ENCODE measurements at regions of chr14 and their contacts with region 1.

Region 1: DNA sequence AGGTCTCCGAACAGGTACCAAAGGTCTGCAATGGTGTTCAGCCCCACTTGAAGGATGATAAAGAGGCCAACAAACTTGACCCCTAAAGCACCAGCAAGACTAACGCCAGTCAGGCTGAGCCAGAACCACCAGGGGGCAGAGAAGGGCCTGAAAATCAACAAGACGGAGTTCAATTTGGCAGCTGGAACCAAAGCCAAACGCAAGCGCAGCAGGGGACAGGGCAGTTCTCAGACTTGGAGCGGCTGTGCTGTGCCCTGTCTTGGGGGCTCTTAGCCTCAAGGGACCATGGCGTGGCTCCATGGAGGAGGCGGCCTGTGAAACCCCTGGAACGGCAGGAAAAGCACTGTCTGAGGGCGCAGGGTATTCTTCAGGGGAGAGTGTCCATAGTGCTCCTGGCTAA is 19.6 kb downstream of the POMT2 start:
- DNase-seq: peak; percentile 73
- CTCF ChIP-seq: peak; percentile 51

Region 2: DNA sequence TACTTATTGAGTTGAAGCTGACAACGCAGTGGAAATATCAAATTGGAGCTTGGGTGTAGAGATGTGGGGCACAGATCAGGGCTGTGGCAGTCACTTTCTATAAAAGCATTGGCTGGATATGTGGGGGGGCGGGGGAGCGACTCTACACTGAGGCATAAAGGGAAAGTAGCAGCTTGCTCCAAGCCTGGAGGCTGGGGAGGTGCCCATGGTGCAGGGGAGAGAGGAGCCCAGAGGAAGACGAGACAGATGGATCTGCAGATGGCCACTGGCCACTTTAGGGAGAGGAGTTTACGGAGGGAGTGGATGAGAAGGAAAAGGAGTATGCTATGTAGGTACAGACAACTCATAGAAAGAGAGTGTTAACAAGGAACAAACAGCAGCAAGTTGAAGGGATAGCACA is 16.6 kb before region 1 on chr14:
- CTCF ChIA-PET with region 1: interaction called, 11 read pairs
- POLR2A ChIA-PET with region 1: no interaction called
- DNase-seq: no peak
- CTCF ChIP-seq: no peak

Region 3: DNA sequence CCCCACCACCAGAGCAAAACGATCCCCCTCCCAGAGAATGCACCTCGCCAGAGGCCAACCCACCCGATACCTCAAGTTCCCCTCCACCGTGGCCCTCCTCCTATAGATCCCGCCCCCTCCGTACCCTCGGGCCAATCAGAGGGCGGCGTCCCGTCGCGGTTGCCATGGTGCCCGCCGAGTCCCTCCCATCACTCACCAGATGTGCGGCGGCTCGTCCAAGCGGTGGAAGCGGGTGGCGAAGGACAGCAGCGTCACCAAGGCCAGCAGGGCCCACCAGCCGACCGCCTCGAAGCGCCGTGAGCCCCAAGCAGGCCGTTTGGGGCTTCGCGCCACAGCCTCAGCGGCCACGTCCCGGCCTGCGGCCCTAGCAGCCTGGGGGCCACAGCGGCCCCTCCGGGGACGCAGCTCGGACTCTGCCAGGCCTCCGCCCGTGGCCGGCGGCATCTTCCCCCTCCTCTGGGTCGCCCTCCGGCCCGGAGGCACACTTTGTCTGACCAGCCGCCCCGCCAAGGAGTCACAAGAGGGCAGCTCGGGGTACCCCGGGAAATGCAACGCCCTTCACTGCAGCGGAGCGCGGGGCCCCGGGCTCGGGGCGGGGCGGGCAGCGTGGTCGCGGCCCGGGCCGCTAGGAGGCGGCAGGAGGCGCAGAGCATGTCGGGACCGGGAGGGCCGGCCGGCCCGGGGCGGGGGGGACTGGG is 19.3 kb after region 1 on chr14 and contains the start of gene POMT2:
- CTCF ChIA-PET with region 1: interaction called, 247 read pairs
- POLR2A ChIA-PET with region 1: no interaction called
- DNase-seq: peak; percentile 93
- CTCF ChIP-seq: peak; percentile 26